IMR-90 (cell line): ENCODE measurements at regions of chr10 and their contacts with region 1.

Region 1: DNA sequence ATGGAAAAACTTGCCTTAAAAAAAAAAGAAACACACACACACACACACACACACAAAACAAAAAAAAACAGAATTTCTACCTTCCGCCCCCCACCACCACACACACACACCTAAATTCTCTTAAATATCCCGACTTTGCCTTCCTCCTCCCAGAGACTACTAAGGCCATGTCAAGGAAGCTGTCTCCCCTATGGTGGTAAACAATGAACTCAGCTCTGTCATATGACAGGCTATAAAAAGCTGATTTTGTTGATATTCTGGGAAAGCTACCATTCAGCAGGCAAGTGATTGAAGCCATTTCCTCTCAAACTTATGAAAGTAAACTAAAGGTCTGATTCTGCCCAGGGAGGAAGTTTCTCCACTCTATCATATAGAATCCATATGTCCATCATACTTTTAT is 471.0 kb downstream of the GFRA1 start:
- DNase-seq: peak; percentile 3
- ATAC-seq: no peak
- H3K4me3 ChIP-seq: no peak overlapping the region
- H3K27ac ChIP-seq: no peak overlapping the region
- H3K4me1 ChIP-seq: no peaks in the 10 kb centered on the region
- H3K27me3 ChIP-seq: no peaks in the 10 kb centered on the region
- CTCF ChIP-seq: no peak
- POLR2A ChIP-seq: no peak
- RAD21 ChIP-seq: no peak

Region 2: GRCh38 chr10:115790220-115790619 is 11.8 kb before region 1 on chr10:
- CTCF ChIA-PET with region 1: interaction called, 4 read pairs
- POLR2A ChIA-PET with region 1: interaction called, 13 read pairs
- dilution Hi-C with region 1: no loop called
- in situ Hi-C with region 1: no loop called
- intact Hi-C with region 1: no loop called
- DNase-seq: no peak
- ATAC-seq: no peak
- H3K4me3 ChIP-seq: no peak overlapping the region
- H3K27ac ChIP-seq: no peak overlapping the region
- H3K4me1 ChIP-seq: no peaks in the 10 kb centered on the region
- H3K27me3 ChIP-seq: no peaks in the 10 kb centered on the region; the same call in 1 of the 2 replicates
- CTCF ChIP-seq: no peak
- POLR2A ChIP-seq: no peak
- RAD21 ChIP-seq: no peak